Body of pancreas (tissue), 4 donors: ENCODE measurements at regions of chr7 and their contacts with region 1.

Region 1: DNA sequence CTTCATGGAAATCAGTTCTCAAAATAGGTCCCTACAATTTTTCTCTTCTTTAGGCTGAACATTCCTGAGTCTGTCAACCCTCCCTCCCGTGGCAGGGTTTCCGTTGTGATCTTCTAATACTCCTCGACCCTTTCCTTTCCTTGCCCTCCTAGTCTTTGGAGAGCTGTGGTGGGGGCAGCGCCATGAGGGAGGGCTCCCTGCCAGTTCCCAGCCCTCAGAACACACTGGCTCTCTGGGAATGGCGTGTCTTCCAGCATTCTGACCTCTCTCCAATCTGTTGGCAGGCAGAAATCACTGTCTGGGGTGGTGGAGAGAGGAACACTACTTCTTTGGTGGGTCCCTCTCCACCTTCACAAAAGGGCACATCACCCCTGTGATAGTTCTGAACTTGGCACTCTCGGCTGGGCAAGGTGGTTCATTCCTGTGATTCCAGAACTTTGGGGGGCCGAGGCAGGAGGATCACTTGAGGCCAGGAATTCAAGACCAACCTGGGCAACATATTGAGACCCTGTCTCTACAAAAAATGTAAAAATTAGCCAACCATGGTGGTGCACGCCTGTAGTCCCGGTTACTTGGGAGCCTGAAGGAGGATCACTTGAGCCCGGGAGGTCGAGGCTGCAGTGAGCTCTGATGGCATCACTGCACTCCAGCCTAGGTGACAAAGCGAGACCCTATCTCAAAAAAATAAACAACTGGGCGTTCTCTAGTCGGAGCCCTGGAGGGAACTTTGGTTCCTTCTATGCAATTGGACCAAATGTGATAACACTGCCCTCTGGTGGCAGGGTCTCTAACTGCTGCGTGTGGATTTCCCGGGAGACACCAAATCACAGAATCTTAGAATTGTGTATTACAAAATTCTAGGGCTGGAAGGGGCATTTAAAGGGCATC is 13.1 kb upstream of the ARPC1A start:
- DNase-seq: peak; percentile 74 to 82 (median 78)
- ATAC-seq: peak; percentile 77
- H3K4me3 ChIP-seq: no peak overlapping the region
- H3K27ac ChIP-seq: no peak overlapping the region
- H3K4me1 ChIP-seq: peaks cover 3% of the 10 kb centered on the region
- H3K27me3 ChIP-seq: no peaks in the 10 kb centered on the region
- CTCF ChIP-seq: peak; percentile 84 to 99 (median 88)
- POLR2A ChIP-seq: no peak

Region 2: GRCh38 chr7:99040104-99040958 is 272.2 kb before region 1 on chr7:
- intact Hi-C with region 1: loop called (anchors 5 kb)
- DNase-seq: peak; percentile 86 to 90 (median 88)
- ATAC-seq: peak; percentile 81
- H3K4me3 ChIP-seq: no peak overlapping the region
- H3K27ac ChIP-seq: peak overlapping the region in 2 of 4 donors; percentile 42 to 45
- H3K4me1 ChIP-seq: peaks cover 5% of the 10 kb centered on the region
- H3K27me3 ChIP-seq: no peaks in the 10 kb centered on the region
- CTCF ChIP-seq: peak; percentile 51 to 90 (median 79)
- POLR2A ChIP-seq: no peak